Heart left ventricle (tissue), 16 donors: ENCODE measurements at regions of chr1 and their contacts with region 1.

Region 1: GRCh38 chr1:26363549-26364448 is 8.8 kb downstream of the ZNF683 start:
- DNase-seq: peak; percentile 70 to 89 (median 78)
- ATAC-seq: peak; percentile 50 to 80 (median 71)
- H3K4me3 ChIP-seq: no peak overlapping the region
- H3K27ac ChIP-seq: no peak overlapping the region
- H3K4me1 ChIP-seq: peaks cover 0 to 19% (median 8%) of the 10 kb centered on the region in 12 donors
- H3K27me3 ChIP-seq: peaks cover 17 to 57% (median 28%) of the 10 kb centered on the region in 9 donors
- CTCF ChIP-seq: peak; percentile 65 to 94 (median 86)
- POLR2A ChIP-seq: no peak

Region 2: GRCh38 chr1:26279456-26280332 is 84.1 kb before region 1 on chr1 and contains the start of gene SH3BGRL3:
- intact Hi-C with region 1: loop called in 2 of 10 experiments (anchors 5 kb)
- DNase-seq: peak; percentile 92 to 94 (median 92)
- ATAC-seq: peak; percentile 51 to 85 (median 80)
- H3K4me3 ChIP-seq: peak within 1 kb of the TSS; percentile 56 to 99 (median 74)
- H3K27ac ChIP-seq: peak within 1 kb of the TSS; percentile 60 to 98 (median 92)
- H3K4me1 ChIP-seq: peaks cover 8 to 93% (median 70%) of the 10 kb centered on the region in 12 donors
- H3K27me3 ChIP-seq: no peaks in the 10 kb centered on the region
- CTCF ChIP-seq: peak in 10 of 12 donors; percentile 19 to 67 (median 33)
- POLR2A ChIP-seq: peak; percentile 32 to 94
- total RNA-seq, gene SH3BGRL3: 22.4 to 234 (median 40.0) TPM